GM12878 (cell line): ENCODE measurements at regions of chr1 and their contacts with region 1.

Region 1: DNA sequence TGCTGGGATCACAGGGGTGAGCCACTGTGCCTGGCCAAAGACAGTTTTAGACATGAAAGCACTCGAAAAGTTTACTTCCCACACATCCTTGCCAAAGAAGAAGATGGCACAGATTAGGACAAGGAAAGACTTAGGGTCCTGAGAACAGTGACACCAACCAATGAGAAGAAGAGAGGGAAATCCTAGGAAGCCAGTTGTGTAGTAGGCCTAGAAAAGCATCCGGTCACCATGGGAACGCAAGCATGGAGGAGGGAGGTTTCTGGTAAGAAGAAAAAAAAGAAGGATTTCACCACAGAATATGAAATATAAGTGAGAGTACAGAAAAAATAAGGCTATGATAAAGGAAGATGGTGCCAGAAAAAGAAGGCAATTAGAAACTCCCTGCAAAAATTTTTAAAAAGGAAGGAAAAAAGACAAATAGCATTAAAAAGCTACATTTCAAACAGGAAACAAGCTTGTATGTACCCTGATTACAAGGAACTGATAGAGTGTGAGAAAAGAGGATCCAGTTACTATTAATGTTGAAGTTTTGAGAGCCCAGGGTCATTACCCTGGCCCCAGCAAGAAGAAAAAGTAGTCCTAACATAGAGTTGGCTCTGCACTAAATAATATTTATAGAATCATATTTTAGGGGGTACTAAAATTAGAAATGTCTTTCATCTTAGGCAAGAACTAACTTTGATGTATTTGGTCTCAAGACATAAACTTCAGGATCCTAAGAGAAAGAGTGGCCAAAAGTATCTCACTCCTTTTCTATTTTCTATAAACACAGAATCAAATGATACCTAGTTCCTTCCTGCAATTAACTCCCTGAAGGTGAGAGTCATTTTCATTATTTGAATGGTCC is 16.1 kb downstream of the DIPK1A start:
- DNase-seq: no peak
- ATAC-seq: peak; percentile 73
- H3K4me3 ChIP-seq: peak overlapping the region; percentile 22; the same call in 1 of the 2 replicates
- H3K27ac ChIP-seq: peak overlapping the region; percentile 3
- H3K4me1 ChIP-seq: peaks cover 29% of the 10 kb centered on the region
- H3K27me3 ChIP-seq: no peaks in the 10 kb centered on the region
- CTCF ChIP-seq: no peak
- EP300 ChIP-seq: no peak
- POLR2A ChIP-seq: no peak
- RAD21 ChIP-seq: no peak

Region 2: GRCh38 chr1:92929461-92929860 is 15.7 kb before region 1 on chr1:
- CTCF ChIA-PET with region 1: interaction called, 7 read pairs
- POLR2A ChIA-PET with region 1: interaction called, 5 read pairs
- RAD21 ChIA-PET with region 1: interaction called, 10 read pairs
- SMC1A ChIA-PET with region 1: interaction called, 37 read pairs
- in situ Hi-C with region 1: no loop called
- intact Hi-C with region 1: no loop called
- DNase-seq: no peak
- ATAC-seq: peak; percentile 78
- H3K4me3 ChIP-seq: peak overlapping the region; percentile 35; the same call in 1 of the 2 replicates
- H3K27ac ChIP-seq: peak overlapping the region; percentile 50
- H3K4me1 ChIP-seq: peaks cover 47% of the 10 kb centered on the region
- H3K27me3 ChIP-seq: no peaks in the 10 kb centered on the region
- CTCF ChIP-seq: no peak
- EP300 ChIP-seq: no peak
- POLR2A ChIP-seq: no peak
- RAD21 ChIP-seq: no peak

Region 3: DNA sequence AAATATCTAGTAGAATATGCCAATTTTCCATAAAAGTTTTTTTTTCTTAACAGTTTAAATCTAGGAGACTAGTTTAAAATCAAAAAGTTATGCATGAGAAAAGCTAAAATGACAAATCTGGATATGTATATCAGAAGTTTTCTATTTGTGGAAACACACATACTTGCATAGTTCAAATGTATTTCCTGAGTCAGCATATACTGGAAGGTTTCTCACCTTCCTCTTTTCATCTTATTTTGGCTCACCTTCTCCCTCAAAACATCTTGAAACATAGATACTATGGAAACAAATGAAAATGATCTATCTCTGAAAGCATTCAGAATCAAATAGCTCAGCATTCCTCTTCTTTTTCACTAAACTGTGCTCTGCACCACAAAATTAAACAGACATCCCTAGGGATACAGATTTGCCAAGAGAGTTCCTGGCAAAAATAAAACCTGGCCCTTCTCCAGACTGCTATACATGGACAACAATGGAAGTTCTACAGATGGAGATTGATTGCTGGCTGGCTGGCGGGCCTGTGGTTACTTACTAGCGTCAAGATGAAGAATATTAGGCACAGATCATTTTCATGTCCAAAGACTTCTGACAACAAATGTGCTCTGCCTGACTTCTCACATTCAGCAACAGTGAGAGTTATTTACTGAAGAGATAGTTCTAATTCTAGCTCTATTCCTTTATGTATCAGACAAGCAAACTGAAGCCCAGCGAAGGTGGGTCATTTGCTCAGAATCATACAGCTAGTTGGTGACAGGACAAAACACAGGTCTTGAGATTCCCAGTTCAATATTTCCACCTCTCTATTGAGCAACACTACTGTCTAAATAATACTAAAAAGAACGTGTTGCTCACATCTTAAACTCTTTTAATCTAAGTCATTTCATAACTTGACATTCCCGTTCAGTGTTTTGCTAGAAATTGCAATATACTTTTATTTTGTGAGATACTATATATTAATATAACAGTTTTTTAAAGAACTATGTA is 10.4 kb before region 1 on chr1:
- CTCF ChIA-PET with region 1: interaction called, 7 read pairs
- POLR2A ChIA-PET with region 1: interaction called, 5 read pairs
- RAD21 ChIA-PET with region 1: interaction called, 8 read pairs
- SMC1A ChIA-PET with region 1: interaction called, 37 read pairs
- in situ Hi-C with region 1: no loop called
- intact Hi-C with region 1: no loop called
- DNase-seq: no peak
- ATAC-seq: 0 out of 3 replicates have a peak, but pooled peaks have one; percentile 21
- H3K4me3 ChIP-seq: no peak overlapping the region
- H3K27ac ChIP-seq: peak overlapping the region; percentile 0
- H3K4me1 ChIP-seq: peaks cover 37% of the 10 kb centered on the region
- H3K27me3 ChIP-seq: no peaks in the 10 kb centered on the region
- CTCF ChIP-seq: no peak
- EP300 ChIP-seq: no peak
- POLR2A ChIP-seq: no peak
- RAD21 ChIP-seq: no peak

Region 4: GRCh38 chr1:93196591-93196990 is 251.5 kb after region 1 on chr1:
- CTCF ChIA-PET with region 1: no interaction called
- POLR2A ChIA-PET with region 1: no interaction called
- RAD21 ChIA-PET with region 1: no interaction called
- SMC1A ChIA-PET with region 1: no interaction called
- in situ Hi-C with region 1: no loop called
- intact Hi-C with region 1: no loop called
- DNase-seq: no peak
- ATAC-seq: no peak
- H3K4me3 ChIP-seq: no peak overlapping the region
- H3K27ac ChIP-seq: no peak overlapping the region
- H3K4me1 ChIP-seq: no peaks in the 10 kb centered on the region
- H3K27me3 ChIP-seq: no peaks in the 10 kb centered on the region
- CTCF ChIP-seq: no peak
- EP300 ChIP-seq: no peak
- POLR2A ChIP-seq: no peak
- RAD21 ChIP-seq: no peak